Ascending aorta (tissue), 2 donors: ENCODE measurements at regions of chr4 and their contacts with region 1.

Region 1: DNA sequence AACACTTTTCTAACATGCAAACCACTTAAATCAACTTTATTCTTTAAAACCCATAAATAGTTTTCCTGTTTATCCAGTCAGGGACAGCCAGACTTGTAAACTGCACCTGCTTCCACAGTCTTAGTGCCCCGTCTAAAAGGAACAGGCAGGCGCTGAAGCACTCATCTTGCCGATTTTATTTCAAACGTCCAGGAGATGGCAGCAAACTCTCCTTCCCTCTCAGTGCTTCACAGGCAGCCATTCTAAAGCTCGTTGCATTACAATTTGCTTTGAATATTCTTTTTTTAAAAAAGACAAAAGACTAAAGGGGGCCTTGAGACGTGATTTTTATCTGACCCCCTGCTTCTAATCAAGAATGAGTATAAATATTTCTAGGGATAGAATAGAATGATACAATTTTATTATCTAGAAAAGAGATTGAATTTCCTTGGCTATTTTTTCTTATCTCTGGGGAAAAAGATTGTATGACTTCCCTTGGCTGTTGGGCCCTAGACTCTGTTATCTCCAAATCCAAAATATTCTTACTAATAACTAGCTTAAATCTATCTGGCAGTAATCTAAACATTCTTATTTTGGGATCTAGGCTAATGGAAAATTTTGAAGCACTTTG is 93.6 kb upstream of the MYOZ2 start:
- DNase-seq: peak in 1 of 2 donors; percentile 80
- H3K4me3 ChIP-seq: no peak overlapping the region
- H3K27ac ChIP-seq: peak overlapping the region; percentile 95 to 96
- H3K4me1 ChIP-seq: peaks cover 4 to 76% of the 10 kb centered on the region in 2 donors
- H3K27me3 ChIP-seq: no peaks in the 10 kb centered on the region
- CTCF ChIP-seq: peak; percentile 56 to 70 (median 59)

Region 2: GRCh38 chr4:118981839-118982381 is 60.1 kb before region 1 on chr4:
- intact Hi-C with region 1: loop called (anchors 2 kb)
- DNase-seq: peak in 1 of 2 donors; percentile 89
- H3K4me3 ChIP-seq: no peak overlapping the region
- H3K27ac ChIP-seq: peak overlapping the region; percentile 95 to 96
- H3K4me1 ChIP-seq: peaks cover 30 to 65% of the 10 kb centered on the region in 2 donors
- H3K27me3 ChIP-seq: no peaks in the 10 kb centered on the region
- CTCF ChIP-seq: peak; percentile 68 to 90 (median 82)

Region 3: GRCh38 chr4:118997601-118998000 is 44.5 kb before region 1 on chr4:
- intact Hi-C with region 1: loop called (anchors 2 kb)
- DNase-seq: no peak
- H3K4me3 ChIP-seq: peak overlapping the region in 1 of 2 donors; percentile 26
- H3K27ac ChIP-seq: peak overlapping the region; percentile 94 to 95
- H3K4me1 ChIP-seq: peaks cover 9 to 37% of the 10 kb centered on the region in 2 donors
- H3K27me3 ChIP-seq: no peaks in the 10 kb centered on the region
- CTCF ChIP-seq: no peak

Region 4: GRCh38 chr4:119093042-119093827 is 51.2 kb after region 1 on chr4:
- intact Hi-C with region 1: no loop called
- DNase-seq: no peak
- H3K4me3 ChIP-seq: no peak overlapping the region
- H3K27ac ChIP-seq: no peak overlapping the region
- H3K4me1 ChIP-seq: peaks cover 0 to under 1% of the 10 kb centered on the region in 2 donors
- H3K27me3 ChIP-seq: no peaks in the 10 kb centered on the region
- CTCF ChIP-seq: no peak

Region 5: DNA sequence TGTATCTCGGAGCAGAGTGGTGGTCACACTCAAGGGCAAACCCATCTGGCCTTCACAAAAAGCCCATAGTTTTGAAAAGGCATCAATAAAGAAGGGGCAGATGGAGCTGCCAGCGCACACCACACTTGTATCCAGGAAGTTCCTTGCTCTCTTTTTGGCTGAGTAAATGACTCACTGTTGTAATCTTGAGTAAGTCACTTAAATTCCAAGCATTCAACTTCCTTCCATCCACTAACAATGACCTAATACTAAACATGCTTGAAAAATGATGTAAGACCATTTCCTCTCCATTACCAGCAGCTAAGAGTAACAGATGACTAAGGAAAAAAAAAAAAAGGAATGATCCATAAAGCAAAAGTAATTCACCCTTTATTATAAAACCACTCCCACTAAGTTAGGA is 61.2 kb after region 1 on chr4:
- intact Hi-C with region 1: loop called (anchors 2 kb)
- DNase-seq: peak in 1 of 2 donors; percentile 87
- H3K4me3 ChIP-seq: no peak overlapping the region
- H3K27ac ChIP-seq: peak overlapping the region; percentile 81
- H3K4me1 ChIP-seq: peaks cover 0 to 47% of the 10 kb centered on the region in 2 donors
- H3K27me3 ChIP-seq: no peaks in the 10 kb centered on the region
- CTCF ChIP-seq: no peak

Region 6: GRCh38 chr4:119138046-119138445 is 96.0 kb after region 1 on chr4:
- intact Hi-C with region 1: loop called (anchors 5 kb)
- DNase-seq: no peak
- H3K4me3 ChIP-seq: no peak overlapping the region
- H3K27ac ChIP-seq: no peak overlapping the region
- H3K4me1 ChIP-seq: peaks cover 0 to 31% of the 10 kb centered on the region in 2 donors
- H3K27me3 ChIP-seq: no peaks in the 10 kb centered on the region
- CTCF ChIP-seq: no peak

Region 7: GRCh38 chr4:119151161-119151560 is 109.1 kb after region 1 on chr4:
- intact Hi-C with region 1: loop called (anchors 5 kb)
- DNase-seq: no peak
- H3K4me3 ChIP-seq: no peak overlapping the region
- H3K27ac ChIP-seq: peak overlapping the region; percentile 14 to 30
- H3K4me1 ChIP-seq: peaks cover 0 to 2% of the 10 kb centered on the region in 2 donors
- H3K27me3 ChIP-seq: no peaks in the 10 kb centered on the region
- CTCF ChIP-seq: peak in 1 of 3 experiments; percentile 21

Region 8: GRCh38 chr4:119286377-119287002 is 244.4 kb after region 1 on chr4:
- intact Hi-C with region 1: loop called (anchors 2 kb)
- DNase-seq: no peak
- H3K4me3 ChIP-seq: no peak overlapping the region
- H3K27ac ChIP-seq: peak overlapping the region; percentile 28 to 76
- H3K4me1 ChIP-seq: peaks cover 0 to 24% of the 10 kb centered on the region in 2 donors
- H3K27me3 ChIP-seq: no peaks in the 10 kb centered on the region
- CTCF ChIP-seq: peak; percentile 58 to 74 (median 71)